Activated naive CD4-positive, alpha-beta T cell treated with anti-CD3 and anti-CD28 coated beads, Interleukin-2, amount 10 ng/mL, durations not matched to agents 7 days and 5 days (primary cell): ENCODE measurements at regions of chr6 and their contacts with region 1.

Region 1: GRCh38 chr6:39309942-39310531 is 4.2 kb downstream of the KCNK17 start:
- DNase-seq: peak; percentile 75
- H3K4me3 Mint-ChIP-seq: no peak overlapping the region
- H3K27ac Mint-ChIP-seq: no peak overlapping the region
- H3K4me1 Mint-ChIP-seq: peaks cover 8% of the 10 kb centered on the region
- H3K27me3 Mint-ChIP-seq: peaks cover 58% of the 10 kb centered on the region

Region 2: GRCh38 chr6:38997128-38997761 is 312.8 kb before region 1 on chr6:
- CTCF ChIA-PET with region 1: interaction called, 22 read pairs
- DNase-seq: peak; percentile 48
- H3K4me3 Mint-ChIP-seq: no peak overlapping the region
- H3K27ac Mint-ChIP-seq: no peak overlapping the region
- H3K4me1 Mint-ChIP-seq: no peaks in the 10 kb centered on the region
- H3K27me3 Mint-ChIP-seq: peaks cover 32% of the 10 kb centered on the region